Naive thymus-derived CD8-positive, alpha-beta T cell (primary cell): ENCODE measurements at regions of chr17 and their contacts with region 1.

Region 1: GRCh38 chr17:75689441-75689873 is 22.3 kb downstream of the SAP30BP start:
- DNase-seq: peak; percentile 16 to 82 (median 64)
- ATAC-seq: peak; percentile 93 to 96
- H3K4me3 Mint-ChIP-seq: peak overlapping the region; percentile 29 to 75 (median 68)
- H3K27ac Mint-ChIP-seq: peak overlapping the region; percentile 85 to 94 (median 92)
- H3K4me1 Mint-ChIP-seq: peaks cover 22 to 75% (median 55%) of the 10 kb centered on the region in 4 donors
- H3K27me3 Mint-ChIP-seq: no peaks in the 10 kb centered on the region

Region 2: GRCh38 chr17:75667021-75667790 is 22.3 kb before region 1 on chr17 and contains the starts of genes RECQL5 and SAP30BP:
- POLR2A ChIA-PET with region 1: interaction called, 13 read pairs
- DNase-seq: peak; percentile 95 to 99 (median 96)
- ATAC-seq: peak; percentile 100
- H3K4me3 Mint-ChIP-seq: peak within 1 kb of the TSS in 7 of 10 donors; percentile 12 to 76 (median 60)
- H3K27ac Mint-ChIP-seq: peak within 1 kb of the TSS in 7 of 10 donors; percentile 18 to 84 (median 60)
- H3K4me1 Mint-ChIP-seq: peaks cover 16 to 34% (median 23%) of the 10 kb centered on the region in 4 donors
- H3K27me3 Mint-ChIP-seq: no peaks in the 10 kb centered on the region
- polyA plus RNA-seq, gene RECQL5: 12.3 to 23.4 (median 19.3) TPM
- polyA plus RNA-seq, gene SAP30BP: 57.8 to 72.0 (median 69.6) TPM